ENCODE measurements at regions of chrX and their contacts with region 1.

Region 1: GRCh38 chrX:136920001-136920400 is 39.5 kb upstream of the RBMX start:
- DNase-seq: no peak
- H3K4me3 Mint-ChIP-seq: no peak overlapping the region
- H3K27ac Mint-ChIP-seq: no peak overlapping the region
- H3K4me1 Mint-ChIP-seq: peaks cover 3% of the 10 kb centered on the region
- H3K27me3 Mint-ChIP-seq: no peaks in the 10 kb centered on the region
- CTCF ChIP-seq: no peak

Region 2: DNA sequence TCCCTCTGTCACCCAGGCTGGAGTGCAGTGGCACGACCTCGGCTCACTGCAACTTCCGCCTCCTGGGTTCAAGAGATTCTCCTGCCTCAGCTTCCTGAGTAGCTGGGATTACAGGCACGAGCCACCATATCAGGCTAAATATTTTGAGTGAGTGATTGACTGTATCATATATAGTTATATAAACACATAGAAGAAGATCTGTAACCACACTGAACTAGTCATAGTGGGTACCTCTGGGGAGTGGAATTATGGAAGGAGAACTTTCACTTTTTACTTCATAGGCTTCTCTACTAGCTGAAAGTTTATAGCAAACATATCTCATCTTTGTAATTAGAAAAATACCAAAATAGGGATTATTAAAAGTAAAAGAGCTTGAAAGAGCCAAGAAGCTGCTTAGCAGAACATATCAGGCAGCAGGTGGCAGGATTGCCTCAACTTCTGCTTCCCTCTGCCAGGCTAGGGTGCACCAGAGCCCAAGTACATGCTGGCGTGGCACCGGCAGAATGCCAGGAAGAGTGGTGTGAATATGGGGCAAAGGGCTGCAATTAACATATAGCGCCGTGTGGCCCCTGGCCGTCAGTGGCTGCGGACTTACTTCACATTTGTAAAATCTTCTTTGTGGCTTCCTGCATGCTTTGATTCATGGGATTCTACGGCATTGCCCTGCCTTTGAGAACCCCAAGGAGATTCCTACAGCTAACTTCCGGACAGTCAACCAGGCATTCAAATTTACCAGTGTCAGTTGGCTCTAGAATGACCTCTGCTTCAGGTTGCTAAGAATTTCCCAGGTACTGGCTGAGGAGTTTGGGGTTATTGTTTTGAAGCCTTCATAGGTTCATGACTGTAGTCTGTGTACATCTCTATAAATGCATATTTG is 311.5 kb before region 1 on chrX:
- CTCF ChIA-PET with region 1: no interaction called
- intact Hi-C with region 1: loop called (anchors 10 kb)
- DNase-seq: peak; percentile 65
- H3K4me3 Mint-ChIP-seq: no peak overlapping the region
- H3K27ac Mint-ChIP-seq: no peak overlapping the region
- H3K4me1 Mint-ChIP-seq: no peaks in the 10 kb centered on the region
- H3K27me3 Mint-ChIP-seq: no peaks in the 10 kb centered on the region
- CTCF ChIP-seq: peak; percentile 32

Region 3: GRCh38 chrX:136711147-136711546 is 208.9 kb before region 1 on chrX:
- CTCF ChIA-PET with region 1: no interaction called
- intact Hi-C with region 1: loop called (anchors 1 kb)
- DNase-seq: peak; percentile 45
- H3K4me3 Mint-ChIP-seq: no peak overlapping the region
- H3K27ac Mint-ChIP-seq: no peak overlapping the region
- H3K4me1 Mint-ChIP-seq: no peaks in the 10 kb centered on the region
- H3K27me3 Mint-ChIP-seq: peaks cover 1% of the 10 kb centered on the region
- CTCF ChIP-seq: no peak

Region 4: DNA sequence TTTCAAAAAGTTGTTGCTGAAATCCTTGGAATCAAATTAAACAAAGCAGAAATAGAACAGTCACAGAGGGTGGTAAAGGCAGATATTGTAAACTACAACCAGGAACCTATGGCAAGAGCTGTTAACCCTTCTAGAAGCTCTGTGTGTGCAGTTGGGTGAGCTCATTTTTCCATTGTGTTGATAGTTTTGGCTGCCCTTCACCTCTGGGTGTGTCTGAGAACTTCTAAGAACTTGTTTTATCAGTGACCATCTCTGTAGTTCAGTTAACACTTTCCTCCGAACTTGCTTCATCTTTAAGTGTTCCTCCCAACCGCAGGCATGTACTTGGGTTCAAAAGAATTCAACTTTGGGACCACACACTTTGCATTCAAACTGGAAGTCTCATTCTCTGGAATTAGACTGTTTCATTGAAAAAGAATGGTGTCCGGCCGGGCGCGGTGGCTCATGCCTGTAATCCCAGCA is 72.1 kb before region 1 on chrX:
- CTCF ChIA-PET with region 1: no interaction called
- intact Hi-C with region 1: no loop called
- DNase-seq: no peak
- H3K4me3 Mint-ChIP-seq: no peak overlapping the region
- H3K27ac Mint-ChIP-seq: no peak overlapping the region
- H3K4me1 Mint-ChIP-seq: no peaks in the 10 kb centered on the region
- H3K27me3 Mint-ChIP-seq: no peaks in the 10 kb centered on the region
- CTCF ChIP-seq: no peak

Region 5: GRCh38 chrX:136866337-136867095 is 53.5 kb before region 1 on chrX:
- CTCF ChIA-PET with region 1: no interaction called
- intact Hi-C with region 1: loop called (anchors 5 kb)
- DNase-seq: no peak
- H3K4me3 Mint-ChIP-seq: no peak overlapping the region
- H3K27ac Mint-ChIP-seq: no peak overlapping the region
- H3K4me1 Mint-ChIP-seq: peaks cover 8% of the 10 kb centered on the region
- H3K27me3 Mint-ChIP-seq: no peaks in the 10 kb centered on the region
- CTCF ChIP-seq: no peak